ENCODE measurements at regions of chr5 and their contacts with region 1.

Region 1: GRCh38 chr5:36414869-36415282 is 113.2 kb upstream of the RANBP3L start:
- DNase-seq: peak; percentile 60
- H3K4me3 ChIP-seq: no peak overlapping the region
- H3K27ac ChIP-seq: no peak overlapping the region
- H3K4me1 ChIP-seq: peaks cover 23% of the 10 kb centered on the region
- H3K27me3 ChIP-seq: no peaks in the 10 kb centered on the region
- CTCF ChIP-seq: peak; percentile 40 to 55

Region 2: DNA sequence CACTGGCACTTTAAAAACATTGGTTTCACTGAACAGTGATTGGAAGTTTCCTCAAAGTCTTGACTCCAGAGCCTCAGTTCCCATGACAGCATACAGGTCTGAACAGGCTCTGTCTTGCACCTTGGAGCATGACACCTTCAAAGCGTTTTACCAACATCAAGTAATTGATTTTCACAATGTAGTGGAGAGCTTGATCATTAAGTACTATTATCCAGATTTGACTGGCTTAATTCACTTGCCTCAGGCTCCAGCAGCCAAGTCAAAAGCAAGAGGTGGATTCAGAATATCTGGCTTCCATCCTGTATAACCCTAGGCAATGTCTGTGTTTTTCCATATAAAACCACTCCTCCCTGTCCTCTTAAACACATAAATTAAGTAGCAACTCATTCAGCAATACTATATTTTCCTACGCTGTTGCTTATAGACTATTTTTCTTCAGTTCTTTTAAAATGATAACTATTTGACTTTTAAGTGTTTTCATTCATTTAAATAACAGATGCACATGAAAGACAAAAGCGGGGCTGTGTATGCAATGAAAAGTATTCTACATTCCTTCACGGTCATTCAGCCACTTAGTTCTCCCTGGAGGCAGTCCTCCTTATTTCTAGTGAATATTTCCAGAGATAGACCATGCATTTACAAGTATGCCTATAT is 37.6 kb after region 1 on chr5:
- CTCF ChIA-PET with region 1: no interaction called
- dilution Hi-C with region 1: no loop called
- in situ Hi-C with region 1: no loop called
- intact Hi-C with region 1: loop called (anchors 2 kb)
- DNase-seq: peak; percentile 89
- H3K4me3 ChIP-seq: peak overlapping the region in 2 of 3 experiments; percentile 12 to 23
- H3K27ac ChIP-seq: peak overlapping the region; percentile 87
- H3K4me1 ChIP-seq: peaks cover 53% of the 10 kb centered on the region
- H3K27me3 ChIP-seq: no peaks in the 10 kb centered on the region
- CTCF ChIP-seq: no peak

Region 3: DNA sequence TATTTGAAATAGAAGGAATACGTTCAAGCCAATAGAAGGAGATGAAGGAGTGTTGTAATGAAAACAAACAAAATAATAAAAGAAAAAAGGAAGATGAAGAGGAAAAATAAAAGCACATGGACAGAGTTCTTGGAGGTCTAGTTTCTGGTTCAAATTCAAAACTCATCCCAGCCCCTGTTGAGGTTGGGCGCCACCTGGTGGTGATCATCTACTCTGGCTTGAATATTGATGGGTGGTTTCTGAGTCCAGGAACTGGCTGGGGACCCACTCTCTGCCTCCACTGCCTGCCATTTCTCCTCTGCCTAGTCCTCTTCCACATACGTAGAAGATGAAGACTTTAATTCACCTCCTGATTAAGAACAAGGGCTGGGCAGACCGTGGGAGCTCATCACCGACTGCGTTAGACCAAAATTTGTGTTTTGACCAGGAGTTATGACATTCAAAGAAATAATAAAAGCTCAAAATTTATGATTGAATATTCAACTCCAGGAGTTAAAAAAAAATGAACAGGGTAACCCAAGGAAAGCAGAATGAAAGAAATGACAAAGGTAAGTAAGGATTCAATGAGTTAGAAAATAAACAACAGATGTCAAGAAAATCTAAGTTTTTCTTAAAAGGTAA is 92.6 kb after region 1 on chr5:
- CTCF ChIA-PET with region 1: interaction called, 10 read pairs
- dilution Hi-C with region 1: loop called (anchors 5 kb)
- in situ Hi-C with region 1: loop called (anchors 5 kb)
- intact Hi-C with region 1: loop called (anchors 1 kb)
- DNase-seq: peak; percentile 42
- H3K4me3 ChIP-seq: no peak overlapping the region
- H3K27ac ChIP-seq: no peak overlapping the region
- H3K4me1 ChIP-seq: peaks cover 12% of the 10 kb centered on the region
- H3K27me3 ChIP-seq: no peaks in the 10 kb centered on the region
- CTCF ChIP-seq: peak; percentile 79 to 86

Region 4: DNA sequence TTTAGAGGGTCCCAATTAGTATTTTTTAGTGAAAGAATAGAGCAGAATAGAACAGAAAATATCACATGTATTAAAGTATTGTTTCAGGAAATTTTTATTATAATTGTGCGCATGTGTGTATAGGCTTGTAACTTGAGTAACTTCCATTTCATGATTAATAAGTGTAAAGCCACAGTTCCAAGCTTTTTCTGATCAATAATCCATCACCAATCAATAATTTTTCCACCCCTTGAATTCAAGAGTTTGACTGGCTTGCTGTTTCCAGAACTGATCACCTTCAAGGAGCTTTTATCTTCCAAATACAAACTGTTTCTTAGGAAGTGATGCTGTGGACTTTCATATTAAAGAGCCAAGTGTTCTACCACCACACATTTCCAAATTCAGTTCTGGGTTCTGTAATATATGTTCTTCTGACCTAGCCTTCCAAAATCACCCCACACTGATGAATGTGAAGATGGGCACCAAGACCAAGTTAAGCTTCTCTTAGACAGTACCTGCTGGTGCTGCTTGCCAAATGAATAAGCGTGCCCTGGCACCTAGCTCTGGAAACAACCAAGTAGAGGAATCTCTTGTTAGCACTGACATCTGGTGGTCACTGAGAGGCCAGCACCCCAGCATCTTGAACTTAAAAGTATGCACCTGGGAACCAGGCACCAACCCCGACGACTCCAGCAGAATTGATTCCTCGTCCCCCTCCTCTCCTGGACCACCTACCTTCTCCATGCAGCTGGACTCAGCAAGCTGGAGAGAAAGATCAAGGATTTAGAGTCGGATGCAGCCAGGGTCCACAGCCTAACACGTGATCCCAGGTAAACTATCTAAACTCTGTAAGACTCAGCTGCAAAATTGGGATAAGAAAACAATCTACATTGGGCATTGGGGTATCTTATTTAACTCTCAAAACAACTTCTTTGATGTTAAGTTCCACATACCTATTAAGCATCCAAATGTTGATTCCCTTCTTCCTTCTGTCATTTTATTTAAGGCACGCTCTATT is 281.1 kb after region 1 on chr5:
- CTCF ChIA-PET with region 1: interaction called, 21 read pairs
- dilution Hi-C with region 1: no loop called
- in situ Hi-C with region 1: loop called (anchors 5 kb)
- intact Hi-C with region 1: loop called (anchors 1 kb)
- DNase-seq: peak; percentile 61
- H3K4me3 ChIP-seq: no peak overlapping the region
- H3K27ac ChIP-seq: no peak overlapping the region
- H3K4me1 ChIP-seq: peaks cover 9% of the 10 kb centered on the region
- H3K27me3 ChIP-seq: no peaks in the 10 kb centered on the region
- CTCF ChIP-seq: peak; percentile 80 to 90